ENCODE measurements at regions of chr7 and their contacts with region 1.

Region 1: DNA sequence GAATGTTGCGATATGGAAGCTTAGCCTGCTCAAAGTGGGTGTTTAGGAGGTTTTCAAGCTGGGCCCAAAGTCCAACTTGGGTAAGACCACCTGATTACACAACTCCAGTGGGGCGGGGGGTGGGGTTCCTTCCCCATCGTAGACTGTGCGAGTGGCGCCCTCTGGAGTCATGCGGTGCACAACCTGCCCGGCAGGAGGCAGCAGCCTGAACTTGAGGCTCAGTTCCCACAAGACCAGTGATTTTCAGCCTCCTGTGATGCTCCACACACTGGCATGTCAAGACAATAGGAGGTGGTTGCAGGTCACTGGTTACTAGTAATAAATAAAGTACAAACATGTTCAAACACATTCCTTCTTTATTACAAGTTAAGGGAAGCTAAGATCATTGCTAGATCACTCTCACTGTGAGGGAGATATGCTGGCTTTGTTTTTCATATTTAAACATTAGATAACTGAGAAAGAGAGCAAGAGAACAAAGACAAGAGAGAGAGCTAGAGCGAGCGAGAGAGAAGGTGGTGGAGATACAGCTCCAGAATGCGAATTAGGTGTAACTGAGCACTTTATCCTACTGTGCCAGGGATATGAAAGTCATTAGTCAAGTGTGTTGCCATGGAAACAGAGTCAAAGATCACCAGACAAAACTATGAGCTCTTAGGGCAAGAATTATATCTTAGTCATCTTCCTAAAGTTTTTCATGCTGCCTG is 97.4 kb upstream of the BMPER start:
- DNase-seq: peak; percentile 74
- ATAC-seq: peak; percentile 31
- H3K4me3 ChIP-seq: no peak overlapping the region
- H3K27ac ChIP-seq: no peak overlapping the region
- H3K4me1 ChIP-seq: peaks cover 12% of the 10 kb centered on the region
- H3K27me3 ChIP-seq: no peaks in the 10 kb centered on the region; the same call in 1 of the 2 replicates
- CTCF ChIP-seq: peak; percentile 50
- POLR2A ChIP-seq: no peak
- RAD21 ChIP-seq: peak; percentile 45

Region 2: GRCh38 chr7:33623267-33623666 is 184.7 kb before region 1 on chr7:
- CTCF ChIA-PET with region 1: no interaction called
- POLR2A ChIA-PET with region 1: no interaction called
- dilution Hi-C with region 1: no loop called
- in situ Hi-C with region 1: no loop called
- intact Hi-C with region 1: no loop called
- DNase-seq: peak; percentile 19
- ATAC-seq: no peak
- H3K4me3 ChIP-seq: no peak overlapping the region
- H3K27ac ChIP-seq: no peak overlapping the region
- H3K4me1 ChIP-seq: no peaks in the 10 kb centered on the region
- H3K27me3 ChIP-seq: no peaks in the 10 kb centered on the region
- CTCF ChIP-seq: no peak
- POLR2A ChIP-seq: no peak
- RAD21 ChIP-seq: no peak

Region 3: DNA sequence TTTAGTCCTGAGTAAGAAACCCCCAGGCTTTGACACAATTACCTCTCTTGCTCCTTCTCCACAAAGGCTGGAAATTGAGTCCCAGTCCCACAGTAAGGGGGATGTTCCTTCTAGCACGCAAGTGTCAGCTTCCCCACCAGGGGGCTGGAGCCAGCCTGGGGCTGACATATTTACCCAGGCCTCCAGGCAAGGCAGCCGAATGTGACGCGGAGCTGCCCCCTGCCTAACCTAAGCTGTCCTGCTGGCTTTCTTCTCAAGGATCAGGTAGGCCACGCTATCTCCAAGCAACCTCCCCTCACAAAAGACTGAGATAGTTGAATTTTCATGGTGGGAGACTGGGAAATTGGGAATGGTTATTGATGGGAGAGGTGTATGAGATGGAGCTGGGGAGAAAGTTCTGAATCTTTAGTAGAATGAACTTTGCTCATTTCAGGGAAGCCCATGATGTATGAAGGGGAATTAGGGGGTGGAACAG is 78.3 kb after region 1 on chr7:
- CTCF ChIA-PET with region 1: interaction called, 6 read pairs
- POLR2A ChIA-PET with region 1: no interaction called
- dilution Hi-C with region 1: no loop called
- in situ Hi-C with region 1: no loop called
- intact Hi-C with region 1: loop called (anchors 5 kb)
- DNase-seq: peak; percentile 35
- ATAC-seq: peak; percentile 53
- H3K4me3 ChIP-seq: no peak overlapping the region
- H3K27ac ChIP-seq: peak overlapping the region; percentile 30; the same call in 1 of the 2 replicates
- H3K4me1 ChIP-seq: peaks cover 11% of the 10 kb centered on the region
- H3K27me3 ChIP-seq: peaks cover 8% of the 10 kb centered on the region
- CTCF ChIP-seq: peak; percentile 52
- POLR2A ChIP-seq: no peak
- RAD21 ChIP-seq: peak; percentile 50